ENCODE measurements at regions of chr21 and their contacts with region 1.

Region 1: DNA sequence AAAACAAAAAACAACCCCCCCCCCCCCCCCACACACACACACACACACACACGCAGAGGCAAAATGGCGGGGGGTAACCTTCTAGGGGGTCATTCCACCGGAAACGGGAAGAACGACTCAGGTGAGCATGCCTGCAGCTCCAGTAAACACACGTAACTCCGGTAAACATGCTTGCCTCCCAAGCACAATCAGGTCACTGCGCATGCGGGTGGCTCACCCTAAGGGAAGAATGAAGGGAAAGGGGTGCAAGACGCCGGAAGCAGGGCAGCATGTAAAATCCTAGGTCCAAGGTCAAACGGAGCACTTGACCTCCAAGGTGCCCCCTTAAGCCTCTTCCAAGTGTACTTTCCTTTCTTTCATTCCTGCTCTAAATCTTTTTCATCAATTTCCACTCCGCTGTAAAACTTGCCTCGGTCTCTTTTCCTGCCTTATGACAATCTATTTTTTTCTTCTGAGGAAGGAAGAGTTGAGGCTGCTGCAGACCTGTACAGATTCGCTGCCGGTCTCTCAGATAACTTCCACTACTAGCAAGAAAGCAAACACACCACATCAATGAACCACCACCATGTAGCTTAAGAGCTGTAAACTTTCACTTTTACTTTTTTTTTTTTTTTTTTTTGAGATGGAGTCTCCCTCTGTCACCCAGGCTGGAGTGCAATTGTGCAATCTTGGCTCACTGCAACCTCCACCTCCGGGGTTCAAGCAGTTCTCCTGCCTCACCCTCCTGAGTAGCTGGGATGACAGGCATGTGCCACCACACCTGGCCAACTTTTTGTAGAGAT is 21.0 kb upstream of the CBR3 start:
- DNase-seq: no peak
- H3K4me3 ChIP-seq: no peak overlapping the region
- H3K27ac ChIP-seq: no peak overlapping the region
- H3K4me1 ChIP-seq: no peaks in the 10 kb centered on the region
- H3K27me3 ChIP-seq: no peaks in the 10 kb centered on the region
- CTCF ChIP-seq: no peak

Region 2: GRCh38 chr21:35428489-35428888 is 685.3 kb before region 1 on chr21:
- CTCF ChIA-PET with region 1: no interaction called
- dilution Hi-C with region 1: no loop called
- in situ Hi-C with region 1: no loop called
- intact Hi-C with region 1: loop called (anchors 10 kb)
- DNase-seq: no peak
- H3K4me3 ChIP-seq: no peak overlapping the region
- H3K27ac ChIP-seq: no peak overlapping the region
- H3K4me1 ChIP-seq: no peaks in the 10 kb centered on the region
- H3K27me3 ChIP-seq: no peaks in the 10 kb centered on the region
- CTCF ChIP-seq: no peak

Region 3: DNA sequence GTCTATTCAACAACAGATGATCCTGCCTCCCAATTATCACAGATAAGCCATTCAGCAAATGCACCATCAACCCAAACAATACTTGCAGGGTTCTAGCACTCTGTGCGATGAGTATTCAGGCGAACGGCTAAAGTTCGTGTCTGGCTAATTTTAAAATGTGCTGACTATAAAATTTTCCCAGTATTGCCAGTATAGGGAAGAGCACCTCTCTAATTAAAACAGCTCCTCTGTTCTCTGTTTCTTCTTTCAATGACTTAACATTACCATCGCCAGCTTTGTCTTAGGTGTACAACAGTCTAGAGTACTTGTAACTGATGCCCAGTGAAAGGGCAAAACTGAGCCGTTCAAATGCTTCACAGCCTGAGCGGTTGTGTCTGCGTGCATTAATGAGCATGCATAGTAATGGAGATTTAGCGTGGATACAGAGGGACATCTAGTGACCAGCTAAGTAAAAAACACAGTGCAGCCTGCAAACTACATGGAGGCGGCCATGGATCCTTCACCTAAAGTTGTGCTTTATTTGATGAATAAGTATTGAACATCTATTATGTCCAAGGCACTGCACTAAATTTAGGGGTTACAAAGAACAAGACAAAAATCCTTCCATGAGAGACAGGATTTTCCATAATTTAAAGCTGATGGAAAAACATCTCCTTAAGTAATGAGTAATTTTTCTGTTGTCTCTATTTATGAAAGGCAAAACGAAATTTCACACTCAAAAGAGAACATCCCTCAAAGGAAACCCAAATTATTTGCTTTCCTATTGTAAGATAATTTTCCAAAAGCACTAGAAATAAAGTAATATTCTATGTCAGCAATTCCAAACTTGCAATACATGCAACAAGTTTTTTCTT is 173.5 kb before region 1 on chr21:
- CTCF ChIA-PET with region 1: no interaction called
- dilution Hi-C with region 1: no loop called
- in situ Hi-C with region 1: no loop called
- intact Hi-C with region 1: loop called (anchors 1 kb)
- DNase-seq: peak; percentile 66
- H3K4me3 ChIP-seq: no peak overlapping the region
- H3K27ac ChIP-seq: no peak overlapping the region
- H3K4me1 ChIP-seq: no peaks in the 10 kb centered on the region
- H3K27me3 ChIP-seq: no peaks in the 10 kb centered on the region
- CTCF ChIP-seq: peak; percentile 77

Region 4: GRCh38 chr21:36028127-36029069 is 85.4 kb before region 1 on chr21:
- CTCF ChIA-PET with region 1: no interaction called
- dilution Hi-C with region 1: no loop called
- in situ Hi-C with region 1: no loop called
- intact Hi-C with region 1: loop called (anchors 1 kb)
- DNase-seq: peak; percentile 70
- H3K4me3 ChIP-seq: no peak overlapping the region
- H3K27ac ChIP-seq: no peak overlapping the region
- H3K4me1 ChIP-seq: peaks cover 11% of the 10 kb centered on the region
- H3K27me3 ChIP-seq: no peaks in the 10 kb centered on the region
- CTCF ChIP-seq: peak; percentile 96 to 97

Region 5: GRCh38 chr21:36060159-36060921 is 53.5 kb before region 1 on chr21 and contains the start of gene SETD4:
- CTCF ChIA-PET with region 1: no interaction called
- dilution Hi-C with region 1: no loop called
- in situ Hi-C with region 1: no loop called
- intact Hi-C with region 1: loop called (anchors 1 kb)
- DNase-seq: peak; percentile 94
- H3K4me3 ChIP-seq: peak within 1 kb of the TSS; percentile 62 to 95 (median 85)
- H3K27ac ChIP-seq: peak within 1 kb of the TSS; percentile 74
- H3K4me1 ChIP-seq: peaks cover 11% of the 10 kb centered on the region
- H3K27me3 ChIP-seq: no peaks in the 10 kb centered on the region
- CTCF ChIP-seq: no peak
- total RNA-seq, gene SETD4: 21.3 to 29.5 TPM

Region 6: GRCh38 chr21:36087362-36088138 is 26.3 kb before region 1 on chr21:
- CTCF ChIA-PET with region 1: no interaction called
- dilution Hi-C with region 1: no loop called
- in situ Hi-C with region 1: no loop called
- intact Hi-C with region 1: loop called (anchors 2 kb)
- DNase-seq: no peak
- H3K4me3 ChIP-seq: no peak overlapping the region
- H3K27ac ChIP-seq: no peak overlapping the region
- H3K4me1 ChIP-seq: peaks cover 37% of the 10 kb centered on the region
- H3K27me3 ChIP-seq: no peaks in the 10 kb centered on the region
- CTCF ChIP-seq: peak in 1 of 2 donors; percentile 12

Region 7: GRCh38 chr21:36381841-36382589 is 268.2 kb after region 1 on chr21:
- CTCF ChIA-PET with region 1: no interaction called
- dilution Hi-C with region 1: no loop called
- in situ Hi-C with region 1: no loop called
- intact Hi-C with region 1: no loop called
- DNase-seq: no peak
- H3K4me3 ChIP-seq: no peak overlapping the region
- H3K27ac ChIP-seq: no peak overlapping the region
- H3K4me1 ChIP-seq: peaks cover 4% of the 10 kb centered on the region
- H3K27me3 ChIP-seq: no peaks in the 10 kb centered on the region
- CTCF ChIP-seq: no peak